ENCODE measurements at regions of chrX and their contacts with region 1.

Region 1: GRCh38 chrX:74133156-74133796 is 170.7 kb upstream of the ZCCHC13 start:
- DNase-seq: peak; percentile 46
- ATAC-seq: peak; percentile 74
- H3K4me3 ChIP-seq: no peak overlapping the region
- H3K27ac ChIP-seq: no peak overlapping the region
- H3K4me1 ChIP-seq: no peaks in the 10 kb centered on the region
- H3K27me3 ChIP-seq: no peaks in the 10 kb centered on the region
- CTCF ChIP-seq: peak; percentile 71
- EP300 ChIP-seq: no peak
- POLR2A ChIP-seq: no peak
- RAD21 ChIP-seq: no peak

Region 2: DNA sequence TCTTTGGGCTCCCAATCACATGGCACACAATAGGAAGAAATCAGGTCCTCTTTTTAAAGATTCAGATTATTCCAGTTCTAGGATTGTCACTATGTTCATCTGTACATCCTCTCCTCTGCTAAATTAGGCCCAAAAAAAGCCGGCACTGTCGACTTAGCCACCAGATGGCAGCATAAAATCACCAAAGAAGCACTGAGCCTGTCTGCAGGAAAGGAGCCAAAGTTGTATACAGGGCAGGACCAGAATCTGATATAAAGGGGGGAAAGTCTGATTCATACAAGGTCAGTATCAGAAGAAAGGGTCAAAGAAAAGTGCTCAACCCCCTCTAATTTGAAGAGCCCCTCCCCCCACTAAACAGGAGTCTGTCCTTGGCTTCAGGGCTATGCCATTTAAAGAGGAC is 277.7 kb before region 1 on chrX:
- CTCF ChIA-PET with region 1: interaction called, 8 read pairs
- POLR2A ChIA-PET with region 1: no interaction called
- in situ Hi-C with region 1: loop called (anchors 5 kb)
- intact Hi-C with region 1: loop called (anchors 2 kb)
- DNase-seq: peak; percentile 22
- ATAC-seq: peak; percentile 79
- H3K4me3 ChIP-seq: no peak overlapping the region
- H3K27ac ChIP-seq: no peak overlapping the region
- H3K4me1 ChIP-seq: no peaks in the 10 kb centered on the region
- H3K27me3 ChIP-seq: no peaks in the 10 kb centered on the region
- CTCF ChIP-seq: peak; percentile 78
- EP300 ChIP-seq: no peak
- POLR2A ChIP-seq: no peak
- RAD21 ChIP-seq: peak; percentile 57

Region 3: GRCh38 chrX:73965833-73966232 is 167.4 kb before region 1 on chrX:
- CTCF ChIA-PET with region 1: no interaction called
- POLR2A ChIA-PET with region 1: no interaction called
- in situ Hi-C with region 1: no loop called
- intact Hi-C with region 1: no loop called
- DNase-seq: no peak
- ATAC-seq: no peak
- H3K4me3 ChIP-seq: no peak overlapping the region
- H3K27ac ChIP-seq: no peak overlapping the region
- H3K4me1 ChIP-seq: 0 out of 2 replicates have a peak, but pooled peaks cover 6% of the 10 kb centered on the region
- H3K27me3 ChIP-seq: no peaks in the 10 kb centered on the region
- CTCF ChIP-seq: no peak
- EP300 ChIP-seq: no peak
- POLR2A ChIP-seq: no peak
- RAD21 ChIP-seq: no peak

Region 4: DNA sequence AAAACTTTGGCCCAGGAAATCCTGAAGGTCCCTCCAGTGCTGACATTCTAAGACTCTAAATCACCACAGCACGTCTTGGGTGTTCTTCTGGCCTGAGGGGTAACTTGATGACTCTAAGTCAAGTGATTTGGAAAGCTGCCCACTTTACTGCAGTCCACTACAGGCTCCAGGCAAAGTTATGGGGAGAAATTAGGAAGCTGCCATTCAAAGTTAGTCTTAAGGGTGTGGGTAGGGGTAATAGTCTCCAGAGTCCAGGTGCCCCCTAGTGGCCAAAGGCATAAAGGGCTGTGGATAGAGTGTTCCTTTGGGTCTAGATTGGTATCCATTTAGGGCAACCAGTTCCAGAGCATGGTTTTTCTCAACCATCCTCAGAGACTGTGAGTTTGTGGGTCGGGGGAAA is 249.3 kb after region 1 on chrX:
- CTCF ChIA-PET with region 1: no interaction called
- POLR2A ChIA-PET with region 1: no interaction called
- in situ Hi-C with region 1: no loop called
- intact Hi-C with region 1: no loop called
- DNase-seq: peak; percentile 29
- ATAC-seq: peak; percentile 89
- H3K4me3 ChIP-seq: no peak overlapping the region
- H3K27ac ChIP-seq: no peak overlapping the region
- H3K4me1 ChIP-seq: no peaks in the 10 kb centered on the region
- H3K27me3 ChIP-seq: no peaks in the 10 kb centered on the region
- CTCF ChIP-seq: peak; percentile 61
- EP300 ChIP-seq: no peak
- POLR2A ChIP-seq: no peak
- RAD21 ChIP-seq: no peak

Measured in HepG2 (cell line).